IMR-90 (cell line): ENCODE measurements at regions of chr12 and their contacts with region 1.

Region 1: GRCh38 chr12:25935355-25936144 is 22.9 kb upstream of the RASSF8 start:
- DNase-seq: no peak
- ATAC-seq: no peak
- H3K4me3 ChIP-seq: no peak overlapping the region
- H3K27ac ChIP-seq: no peak overlapping the region
- H3K4me1 ChIP-seq: no peaks in the 10 kb centered on the region
- H3K27me3 ChIP-seq: no peaks in the 10 kb centered on the region
- CTCF ChIP-seq: no peak
- POLR2A ChIP-seq: no peak
- RAD21 ChIP-seq: no peak

Region 2: GRCh38 chr12:25866586-25867378 is 68.8 kb before region 1 on chr12:
- CTCF ChIA-PET with region 1: interaction called, 3 read pairs
- POLR2A ChIA-PET with region 1: no interaction called
- dilution Hi-C with region 1: no loop called
- in situ Hi-C with region 1: no loop called
- intact Hi-C with region 1: loop called (anchors 10 kb)
- DNase-seq: no peak
- ATAC-seq: no peak
- H3K4me3 ChIP-seq: no peak overlapping the region
- H3K27ac ChIP-seq: no peak overlapping the region
- H3K4me1 ChIP-seq: no peaks in the 10 kb centered on the region
- H3K27me3 ChIP-seq: no peaks in the 10 kb centered on the region
- CTCF ChIP-seq: no peak
- POLR2A ChIP-seq: no peak
- RAD21 ChIP-seq: no peak

Region 3: DNA sequence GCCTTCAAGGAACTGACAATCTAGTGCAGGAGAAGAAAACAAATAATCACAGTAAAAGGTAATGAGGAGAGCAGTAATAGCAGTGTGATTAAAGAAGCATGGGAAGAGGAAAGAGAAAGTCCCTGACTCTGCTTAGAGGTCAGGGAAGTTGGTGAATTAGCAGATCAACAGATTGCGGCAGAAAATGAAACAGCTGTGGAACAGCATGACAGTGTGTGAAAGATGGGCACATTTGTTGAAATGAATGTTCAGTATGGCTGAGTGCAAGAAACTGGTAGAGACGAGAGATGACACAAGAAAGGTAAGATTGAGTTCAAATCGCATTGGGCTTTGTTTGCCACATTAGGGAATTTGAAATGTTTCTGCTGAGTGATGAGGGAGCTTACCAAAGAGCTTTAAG is 40.8 kb before region 1 on chr12:
- CTCF ChIA-PET with region 1: no interaction called
- POLR2A ChIA-PET with region 1: no interaction called
- dilution Hi-C with region 1: no loop called
- in situ Hi-C with region 1: no loop called
- intact Hi-C with region 1: loop called (anchors 5 kb)
- DNase-seq: no peak
- ATAC-seq: no peak
- H3K4me3 ChIP-seq: no peak overlapping the region; the same call in 1 of the 2 replicates
- H3K27ac ChIP-seq: no peak overlapping the region
- H3K4me1 ChIP-seq: no peaks in the 10 kb centered on the region
- H3K27me3 ChIP-seq: no peaks in the 10 kb centered on the region; the same call in 1 of the 2 replicates
- CTCF ChIP-seq: no peak
- POLR2A ChIP-seq: no peak
- RAD21 ChIP-seq: no peak

Region 4: GRCh38 chr12:26177283-26177682 is 241.7 kb after region 1 on chr12:
- CTCF ChIA-PET with region 1: no interaction called
- POLR2A ChIA-PET with region 1: no interaction called
- dilution Hi-C with region 1: no loop called
- in situ Hi-C with region 1: no loop called
- intact Hi-C with region 1: no loop called
- DNase-seq: no peak
- ATAC-seq: no peak
- H3K4me3 ChIP-seq: no peak overlapping the region
- H3K27ac ChIP-seq: no peak overlapping the region
- H3K4me1 ChIP-seq: no peaks in the 10 kb centered on the region
- H3K27me3 ChIP-seq: peaks cover 28% of the 10 kb centered on the region
- CTCF ChIP-seq: no peak
- POLR2A ChIP-seq: no peak
- RAD21 ChIP-seq: no peak